ENCODE measurements at regions of chr3 and their contacts with region 1.

Region 1: GRCh38 chr3:23805633-23806533 is at the start of gene UBE2E1:
- DNase-seq: peak; percentile 73 to 89 (median 78)
- H3K4me3 ChIP-seq: peak within 1 kb of the TSS; percentile 58 to 66
- H3K4me3 Mint-ChIP-seq: peak within 1 kb of the TSS; percentile 90 to 97 (median 95)
- H3K27ac ChIP-seq: peak within 1 kb of the TSS; percentile 52
- H3K27ac Mint-ChIP-seq: peak within 1 kb of the TSS; percentile 90 to 98 (median 93)
- H3K4me1 ChIP-seq: peaks cover 41% of the 10 kb centered on the region
- H3K4me1 Mint-ChIP-seq: peaks cover 35 to 48% (median 41%) of the 10 kb centered on the region in 4 donors
- H3K27me3 ChIP-seq: no peaks in the 10 kb centered on the region
- H3K27me3 Mint-ChIP-seq: no peaks in the 10 kb centered on the region
- total RNA-seq, gene UBE2E1: 59.5 to 61.4 TPM

Region 2: GRCh38 chr3:23916886-23917678 is 111.2 kb after region 1 on chr3 and contains the starts of genes NKIRAS1 and RPL15:
- CTCF ChIA-PET with region 1: no interaction called
- POLR2A ChIA-PET with region 1: interaction called, 35 read pairs
- intact Hi-C with region 1: loop called (anchors 1 kb)
- DNase-seq: peak; percentile 97 to 98 (median 97)
- H3K4me3 ChIP-seq: peak within 1 kb of the TSS; percentile 89 to 90
- H3K4me3 Mint-ChIP-seq: peak within 1 kb of the TSS; percentile 98 to 99 (median 99)
- H3K27ac ChIP-seq: peak within 1 kb of the TSS; percentile 94
- H3K27ac Mint-ChIP-seq: peak within 1 kb of the TSS; percentile 92 to 100 (median 98)
- H3K4me1 ChIP-seq: peaks cover 37% of the 10 kb centered on the region
- H3K4me1 Mint-ChIP-seq: peaks cover 28 to 66% (median 40%) of the 10 kb centered on the region in 4 donors
- H3K27me3 ChIP-seq: no peaks in the 10 kb centered on the region
- H3K27me3 Mint-ChIP-seq: peaks cover 0 to 4% of the 10 kb centered on the region in 2 donors
- total RNA-seq, gene NKIRAS1: 5.2 to 5.3 TPM
- total RNA-seq, gene RPL15: 1,856 to 2,010 TPM